ENCODE measurements at regions of chr3 and their contacts with region 1.

Region 1: GRCh38 chr3:99532246-99532645 is 106.1 kb upstream of the COL8A1 start:
- DNase-seq: peak; percentile 29
- ATAC-seq: peak; percentile 93
- H3K4me3 ChIP-seq: no peak overlapping the region
- H3K27ac ChIP-seq: no peak overlapping the region
- H3K4me1 ChIP-seq: no peaks in the 10 kb centered on the region
- H3K27me3 ChIP-seq: no peaks in the 10 kb centered on the region
- CTCF ChIP-seq: peak; percentile 74
- EP300 ChIP-seq: no peak
- POLR2A ChIP-seq: no peak
- RAD21 ChIP-seq: no peak

Region 2: GRCh38 chr3:99499235-99500158 is 32.7 kb before region 1 on chr3:
- CTCF ChIA-PET with region 1: no interaction called
- POLR2A ChIA-PET with region 1: no interaction called
- in situ Hi-C with region 1: no loop called
- intact Hi-C with region 1: loop called (anchors 1 kb)
- DNase-seq: peak; percentile 6
- ATAC-seq: peak; percentile 88
- H3K4me3 ChIP-seq: no peak overlapping the region
- H3K27ac ChIP-seq: no peak overlapping the region
- H3K4me1 ChIP-seq: no peaks in the 10 kb centered on the region
- H3K27me3 ChIP-seq: no peaks in the 10 kb centered on the region
- CTCF ChIP-seq: peak; percentile 60
- EP300 ChIP-seq: no peak
- POLR2A ChIP-seq: no peak
- RAD21 ChIP-seq: no peak

Measured in HepG2 (cell line).